ENCODE measurements at regions of chr15 and their contacts with region 1.

Region 1: GRCh38 chr15:48861813-48862431 is 16.0 kb upstream of the EID1 start:
- DNase-seq: peak in 1 of 2 experiments; percentile 8
- H3K4me3 ChIP-seq: no peak overlapping the region
- H3K27ac ChIP-seq: no peak overlapping the region
- H3K4me1 ChIP-seq: peaks cover 7% of the 10 kb centered on the region; the same call in 1 of the 2 replicates
- H3K27me3 ChIP-seq: no peaks in the 10 kb centered on the region
- CTCF ChIP-seq: peak; percentile 91

Region 2: GRCh38 chr15:48785195-48785594 is 76.7 kb before region 1 on chr15:
- CTCF ChIA-PET with region 1: no interaction called
- POLR2A ChIA-PET with region 1: no interaction called
- intact Hi-C with region 1: no loop called
- DNase-seq: no peak
- H3K4me3 ChIP-seq: no peak overlapping the region
- H3K27ac ChIP-seq: no peak overlapping the region
- H3K4me1 ChIP-seq: no peaks in the 10 kb centered on the region
- H3K27me3 ChIP-seq: no peaks in the 10 kb centered on the region
- CTCF ChIP-seq: no peak

Region 3: GRCh38 chr15:48940448-48940893 is 78.5 kb after region 1 on chr15:
- CTCF ChIA-PET with region 1: no interaction called
- POLR2A ChIA-PET with region 1: interaction called, 18 read pairs
- intact Hi-C with region 1: no loop called
- DNase-seq: no peak
- H3K4me3 ChIP-seq: no peak overlapping the region
- H3K27ac ChIP-seq: no peak overlapping the region
- H3K4me1 ChIP-seq: 0 out of 2 replicates have a peak, but pooled peaks cover under 1% of the 10 kb centered on the region
- H3K27me3 ChIP-seq: no peaks in the 10 kb centered on the region
- CTCF ChIP-seq: no peak

Region 4: GRCh38 chr15:49145651-49146609 is 284.0 kb after region 1 on chr15:
- CTCF ChIA-PET with region 1: interaction called, 6 read pairs
- POLR2A ChIA-PET with region 1: interaction called, 6 read pairs
- intact Hi-C with region 1: loop called (anchors 1 kb)
- DNase-seq: peak; percentile 9 to 62
- H3K4me3 ChIP-seq: peak overlapping the region; percentile 16; the same call in 1 of the 2 replicates
- H3K27ac ChIP-seq: peak overlapping the region; percentile 64
- H3K4me1 ChIP-seq: peaks cover 24% of the 10 kb centered on the region
- H3K27me3 ChIP-seq: no peaks in the 10 kb centered on the region
- CTCF ChIP-seq: peak; percentile 69

Region 5: DNA sequence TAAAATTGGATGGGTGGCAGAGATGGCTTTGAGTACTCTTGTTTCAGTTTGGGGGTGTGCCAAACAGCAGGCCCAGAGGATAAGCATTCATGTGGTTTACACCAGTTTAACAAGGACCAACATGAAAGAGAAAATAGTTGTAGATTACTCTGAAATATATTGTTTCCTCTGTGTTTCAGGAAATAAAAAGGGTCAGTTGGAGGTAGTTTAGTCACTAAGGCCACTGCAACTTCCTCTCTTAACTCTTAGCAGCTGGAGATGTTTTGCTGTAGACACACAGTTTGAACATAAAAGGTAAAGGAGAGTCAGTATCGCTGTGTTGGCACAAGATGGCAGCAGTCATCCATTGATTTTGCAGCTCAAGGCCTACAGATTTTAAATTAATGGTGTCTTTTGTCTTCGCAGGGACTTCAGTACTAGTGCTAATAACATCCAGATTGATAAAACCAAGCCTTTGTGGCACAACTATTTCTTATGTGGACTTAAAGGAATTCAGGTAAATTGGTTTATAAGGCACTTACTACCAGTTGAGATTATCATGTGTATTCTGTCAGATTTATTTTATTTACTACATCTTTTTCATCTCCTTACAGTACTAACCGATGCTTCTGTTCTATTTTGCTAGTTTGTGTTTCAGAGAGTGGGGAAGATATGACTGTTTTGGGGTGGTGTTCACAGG is 373.7 kb after region 1 on chr15:
- CTCF ChIA-PET with region 1: interaction called, 3 read pairs
- POLR2A ChIA-PET with region 1: no interaction called
- intact Hi-C with region 1: loop called (anchors 5 kb)
- DNase-seq: peak in 1 of 2 experiments; percentile 30
- H3K4me3 ChIP-seq: no peak overlapping the region
- H3K27ac ChIP-seq: no peak overlapping the region
- H3K4me1 ChIP-seq: no peaks in the 10 kb centered on the region
- H3K27me3 ChIP-seq: no peaks in the 10 kb centered on the region
- CTCF ChIP-seq: peak; percentile 71

Region 6: DNA sequence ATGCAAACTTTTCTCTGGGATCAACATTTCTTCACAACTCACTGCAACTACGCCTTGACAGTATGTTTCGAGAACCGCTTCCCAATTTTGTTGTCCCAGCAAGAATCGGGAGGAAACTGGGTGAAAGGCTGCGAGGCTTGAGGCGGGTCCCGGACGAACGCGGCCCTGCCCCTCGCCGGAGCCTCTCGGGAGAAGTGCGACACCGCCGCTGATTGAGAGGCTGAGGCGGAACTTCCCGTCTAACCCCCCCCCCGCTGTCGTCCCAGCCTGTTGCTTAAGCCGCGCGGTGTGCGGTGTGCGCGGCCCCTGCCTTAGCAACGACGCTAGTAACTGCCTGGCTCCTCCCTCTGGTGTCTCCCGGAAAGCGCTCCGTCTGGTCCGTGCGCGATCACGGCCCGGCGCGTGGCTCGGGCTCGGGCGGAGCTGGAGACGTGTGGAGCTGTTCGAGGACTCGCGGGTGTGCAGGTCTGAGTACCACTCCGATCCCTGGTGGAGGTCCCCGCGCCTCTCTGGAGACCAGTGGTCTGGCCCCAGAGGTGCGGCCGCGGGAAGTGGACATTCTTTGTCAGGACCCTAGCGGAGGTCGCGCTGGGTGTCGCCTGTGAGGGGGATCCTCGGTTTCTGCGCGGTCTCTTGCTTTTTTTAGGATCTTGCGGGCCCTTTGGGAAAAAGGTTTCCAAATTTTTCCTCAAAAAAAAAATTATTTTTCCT is 758.9 kb after region 1 on chr15 and contains the starts of genes DTWD1 and FAM227B:
- CTCF ChIA-PET with region 1: interaction called, 17 read pairs
- POLR2A ChIA-PET with region 1: no interaction called
- intact Hi-C with region 1: no loop called
- DNase-seq: peak; percentile 86 to 88
- H3K4me3 ChIP-seq: peak within 1 kb of the TSS; percentile 98
- H3K27ac ChIP-seq: peak within 1 kb of the TSS; percentile 75
- H3K4me1 ChIP-seq: peaks cover 13% of the 10 kb centered on the region
- H3K27me3 ChIP-seq: no peaks in the 10 kb centered on the region
- CTCF ChIP-seq: no peak
- total RNA-seq, gene DTWD1: 21.1 and 24.5 TPM in 2 replicates
- total RNA-seq, gene FAM227B: 1.4 and 3.3 TPM in 2 replicates

Measured in PC-9 (cell line).